ENCODE measurements at regions of chr5 and their contacts with region 1.

Region 1: GRCh38 chr5:159987031-159987674 is 21.8 kb upstream of the TTC1 start:
- DNase-seq: peak; percentile 89
- H3K27ac ChIP-seq: no peak overlapping the region
- CTCF ChIP-seq: peak; percentile 94

Region 2: GRCh38 chr5:159286420-159287035 is 700.6 kb before region 1 on chr5:
- CTCF ChIA-PET with region 1: interaction called, 12 read pairs
- POLR2A ChIA-PET with region 1: no interaction called
- DNase-seq: no peak
- H3K27ac ChIP-seq: no peak overlapping the region
- CTCF ChIP-seq: peak; percentile 72

Region 3: GRCh38 chr5:159444441-159445082 is 542.6 kb before region 1 on chr5:
- CTCF ChIA-PET with region 1: interaction called, 52 read pairs
- POLR2A ChIA-PET with region 1: no interaction called
- DNase-seq: peak; percentile 81
- H3K27ac ChIP-seq: no peak overlapping the region
- CTCF ChIP-seq: no peak; the same call in 1 of the 2 replicates

Region 4: DNA sequence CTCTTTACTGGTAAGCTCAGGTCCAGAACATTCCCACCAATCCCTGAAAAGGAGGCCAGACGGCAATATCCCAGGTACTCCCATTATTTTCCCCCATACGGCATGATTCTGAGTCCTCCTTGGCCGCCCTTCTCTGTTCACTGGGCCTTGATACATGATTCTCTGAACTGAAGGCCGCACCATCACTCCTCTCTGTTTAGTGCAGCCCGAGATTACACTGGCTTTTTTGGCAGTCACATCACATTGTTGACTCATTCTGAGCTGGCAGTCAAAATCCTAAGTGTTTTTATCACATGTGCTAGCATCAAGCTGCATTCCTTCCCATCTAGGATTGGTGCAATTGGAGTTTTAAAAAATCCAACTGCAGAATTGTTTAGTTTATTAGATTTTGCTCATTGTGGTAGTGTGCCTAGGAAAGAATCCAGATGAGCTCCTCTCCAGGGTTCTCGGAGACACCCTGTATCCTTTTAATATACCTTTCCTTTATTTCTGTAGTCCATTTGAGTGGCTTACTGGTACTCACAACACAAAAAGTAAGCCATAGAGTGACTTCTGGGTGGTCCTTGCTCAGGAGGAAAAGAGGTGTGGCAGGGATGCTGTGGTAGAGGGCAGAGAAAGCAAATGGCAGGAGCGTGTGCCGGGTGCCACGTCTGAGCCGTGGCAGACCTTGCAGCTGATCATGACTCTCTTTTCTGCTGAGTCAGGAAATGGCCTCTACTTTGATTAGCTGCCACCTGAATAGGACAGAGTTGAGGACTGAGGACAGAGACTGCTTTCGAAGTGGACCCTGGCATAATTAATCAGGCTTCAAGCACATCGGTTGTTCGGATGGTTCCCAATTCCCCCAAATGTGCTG is 535.7 kb before region 1 on chr5:
- CTCF ChIA-PET with region 1: interaction called, 52 read pairs
- POLR2A ChIA-PET with region 1: no interaction called
- DNase-seq: peak; percentile 93
- H3K27ac ChIP-seq: peak overlapping the region; percentile 75
- CTCF ChIP-seq: no peak

Region 5: GRCh38 chr5:159515909-159516415 is 471.2 kb before region 1 on chr5:
- CTCF ChIA-PET with region 1: interaction called, 34 read pairs
- POLR2A ChIA-PET with region 1: no interaction called
- DNase-seq: peak; percentile 80
- H3K27ac ChIP-seq: no peak overlapping the region
- CTCF ChIP-seq: peak; percentile 81

Region 6: GRCh38 chr5:159915904-159916840 is 71.0 kb before region 1 on chr5 and contains the start of gene ADRA1B:
- CTCF ChIA-PET with region 1: interaction called, 12 read pairs
- POLR2A ChIA-PET with region 1: no interaction called
- DNase-seq: peak; percentile 87
- H3K27ac ChIP-seq: no peak within 1 kb of the TSS
- CTCF ChIP-seq: peak; percentile 71

Measured in RWPE1 (cell line).